ENCODE measurements at regions of chr7 and their contacts with region 1.

Region 1: DNA sequence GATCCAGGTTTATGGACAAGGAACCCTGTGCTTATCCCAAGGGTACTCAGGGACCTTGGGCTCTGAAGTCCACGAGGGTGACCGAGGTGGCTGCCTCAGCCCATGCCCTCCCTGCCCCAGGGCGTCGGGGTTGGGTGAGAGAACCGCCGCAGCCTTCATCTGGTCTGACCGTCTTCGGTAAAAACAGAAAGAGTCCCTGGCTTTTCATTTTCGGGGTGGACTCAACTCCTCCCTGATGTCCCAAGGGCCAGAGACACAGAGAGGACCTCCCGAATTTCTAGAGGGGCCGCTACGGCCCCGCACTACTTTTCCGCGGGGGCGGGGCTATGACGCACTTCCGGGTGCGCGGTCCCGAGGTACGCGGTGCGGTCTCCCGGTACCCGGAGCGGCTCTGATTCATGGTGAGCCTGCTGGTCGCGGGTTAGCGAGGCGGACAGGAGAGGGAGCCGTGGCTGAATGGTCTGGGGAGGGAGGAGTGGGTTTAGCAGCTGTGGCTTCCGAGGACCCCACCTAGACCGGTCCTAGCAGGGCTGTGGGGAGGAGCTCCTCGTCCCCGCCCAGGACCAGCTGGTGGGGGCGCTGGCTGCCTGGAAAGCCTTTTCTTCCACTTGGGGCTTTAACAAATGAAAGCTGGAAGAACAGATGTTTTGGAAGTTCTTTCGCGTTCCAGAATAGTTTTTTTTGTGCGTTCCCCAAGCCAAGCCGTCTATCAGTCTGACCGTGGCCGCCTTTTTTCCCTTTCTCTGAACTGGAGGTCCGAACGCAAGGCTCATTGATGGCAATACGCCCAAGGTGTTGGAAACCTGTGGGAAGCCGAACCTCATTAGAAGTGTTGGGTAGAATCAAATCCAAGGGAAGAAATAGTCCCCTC is at the start of gene ZSCAN21:
- DNase-seq: peak; percentile 81
- H3K4me3 ChIP-seq: peak within 1 kb of the TSS; percentile 75 to 87 (median 86)
- H3K27ac ChIP-seq: peak within 1 kb of the TSS; percentile 70
- H3K4me1 ChIP-seq: peaks cover 3% of the 10 kb centered on the region
- H3K27me3 ChIP-seq: no peaks in the 10 kb centered on the region
- CTCF ChIP-seq: peak in 1 of 2 donors; percentile 9
- POLR2A ChIP-seq: peak; percentile 85
- total RNA-seq, gene ZSCAN21: 7.4 and 7.7 TPM in 2 replicates

Region 2: GRCh38 chr7:99910976-99911375 is 138.7 kb before region 1 on chr7:
- CTCF ChIA-PET with region 1: interaction called, 21 read pairs
- POLR2A ChIA-PET with region 1: no interaction called
- dilution Hi-C with region 1: no loop called
- intact Hi-C with region 1: loop called (anchors 1 kb)
- DNase-seq: no peak
- H3K4me3 ChIP-seq: no peak overlapping the region
- H3K27ac ChIP-seq: no peak overlapping the region
- H3K4me1 ChIP-seq: no peaks in the 10 kb centered on the region
- H3K27me3 ChIP-seq: no peaks in the 10 kb centered on the region
- CTCF ChIP-seq: no peak
- POLR2A ChIP-seq: no peak

Region 3: GRCh38 chr7:99918959-99919813 is 130.5 kb before region 1 on chr7 and contains the start of gene TRIM4:
- CTCF ChIA-PET with region 1: interaction called, 21 read pairs
- POLR2A ChIA-PET with region 1: no interaction called
- dilution Hi-C with region 1: no loop called
- intact Hi-C with region 1: no loop called
- DNase-seq: peak; percentile 90
- H3K4me3 ChIP-seq: peak within 1 kb of the TSS; percentile 51 to 84 (median 58)
- H3K27ac ChIP-seq: peak within 1 kb of the TSS; percentile 63
- H3K4me1 ChIP-seq: peaks cover 17% of the 10 kb centered on the region
- H3K27me3 ChIP-seq: no peaks in the 10 kb centered on the region
- CTCF ChIP-seq: peak; percentile 13 to 42
- POLR2A ChIP-seq: peak; percentile 77
- total RNA-seq, gene TRIM4: 19.1 and 22.1 TPM in 2 replicates

Region 4: GRCh38 chr7:99975782-99976521 is 73.7 kb before region 1 on chr7 and contains the start of gene AZGP1:
- CTCF ChIA-PET with region 1: interaction called, 8 read pairs
- POLR2A ChIA-PET with region 1: no interaction called
- dilution Hi-C with region 1: no loop called
- intact Hi-C with region 1: loop called (anchors 5 kb)
- DNase-seq: no peak
- H3K4me3 ChIP-seq: no peak within 1 kb of the TSS
- H3K27ac ChIP-seq: no peak within 1 kb of the TSS
- H3K4me1 ChIP-seq: no peaks in the 10 kb centered on the region
- H3K27me3 ChIP-seq: peaks cover 0 to 5% of the 10 kb centered on the region in 2 experiments
- CTCF ChIP-seq: no peak
- POLR2A ChIP-seq: no peak
- total RNA-seq, gene AZGP1: not detected in 2 replicates

Region 5: GRCh38 chr7:99997545-99998137 is 52.0 kb before region 1 on chr7:
- CTCF ChIA-PET with region 1: interaction called, 158 read pairs
- POLR2A ChIA-PET with region 1: interaction called, 3 read pairs
- dilution Hi-C with region 1: no loop called
- intact Hi-C with region 1: loop called (anchors 1 kb)
- DNase-seq: peak; percentile 55
- H3K4me3 ChIP-seq: peak overlapping the region; percentile 6 to 53 (median 47)
- H3K27ac ChIP-seq: no peak overlapping the region
- H3K4me1 ChIP-seq: no peaks in the 10 kb centered on the region
- H3K27me3 ChIP-seq: no peaks in the 10 kb centered on the region
- CTCF ChIP-seq: peak in 1 of 2 donors; percentile 32
- POLR2A ChIP-seq: peak; percentile 79

Region 6: DNA sequence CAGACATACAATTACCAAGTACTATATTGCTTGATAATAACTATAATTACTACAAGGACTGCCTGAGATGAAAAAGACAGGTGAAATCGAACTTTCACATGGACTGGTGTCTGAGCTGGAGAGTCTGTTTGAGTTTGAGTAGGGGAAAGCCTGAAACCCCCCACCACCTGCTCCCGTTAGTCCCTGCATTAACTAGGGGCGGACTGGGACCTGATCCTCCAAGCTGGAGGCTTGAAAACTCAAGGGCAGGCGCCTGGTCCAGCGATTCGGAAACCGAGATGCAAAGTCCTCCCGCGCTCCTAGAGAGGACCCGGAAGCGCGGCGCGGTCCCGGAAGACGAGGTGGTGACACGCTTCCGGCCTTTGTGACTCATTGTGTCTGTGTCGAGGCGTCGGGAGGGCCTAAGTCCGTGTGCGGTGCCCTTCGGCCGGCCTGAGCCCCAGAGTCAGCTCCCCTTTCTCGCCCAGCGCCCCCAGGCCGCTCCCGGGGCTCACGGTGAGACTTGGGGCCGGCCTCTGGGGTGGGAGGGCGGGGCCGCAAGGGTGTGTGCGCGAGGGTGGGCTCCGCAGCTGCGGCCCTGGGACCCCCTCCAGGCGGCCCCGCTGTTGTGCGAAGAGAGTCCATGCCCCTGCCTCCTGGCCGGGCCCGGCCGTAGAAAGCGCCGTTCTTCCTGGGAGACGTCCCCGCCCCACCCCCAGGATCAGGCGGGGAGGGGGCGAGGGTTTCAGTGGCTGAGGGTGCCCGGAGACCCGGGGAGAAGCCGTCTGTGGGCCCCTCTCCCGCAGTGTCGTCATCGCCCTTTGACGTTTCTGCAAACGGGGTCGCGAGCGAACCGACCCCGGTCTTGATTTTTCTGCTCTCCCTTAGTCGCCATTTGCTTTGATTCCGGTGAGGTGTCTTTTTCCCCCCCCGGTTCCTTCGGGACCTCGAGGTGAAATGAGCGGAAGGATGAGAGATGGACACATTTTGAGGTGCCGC is 34.2 kb before region 1 on chr7 and contains the start of gene ZKSCAN1:
- CTCF ChIA-PET with region 1: interaction called, 4 read pairs
- POLR2A ChIA-PET with region 1: interaction called, 6 read pairs
- dilution Hi-C with region 1: no loop called
- intact Hi-C with region 1: loop called (anchors 1 kb)
- DNase-seq: peak; percentile 89
- H3K4me3 ChIP-seq: peak within 1 kb of the TSS; percentile 92 to 100 (median 97)
- H3K27ac ChIP-seq: peak within 1 kb of the TSS; percentile 98
- H3K4me1 ChIP-seq: peaks cover 12% of the 10 kb centered on the region
- H3K27me3 ChIP-seq: no peaks in the 10 kb centered on the region
- CTCF ChIP-seq: no peak
- POLR2A ChIP-seq: peak; percentile 89
- total RNA-seq, gene ZKSCAN1: 52.8 and 57.8 TPM in 2 replicates

Region 7: DNA sequence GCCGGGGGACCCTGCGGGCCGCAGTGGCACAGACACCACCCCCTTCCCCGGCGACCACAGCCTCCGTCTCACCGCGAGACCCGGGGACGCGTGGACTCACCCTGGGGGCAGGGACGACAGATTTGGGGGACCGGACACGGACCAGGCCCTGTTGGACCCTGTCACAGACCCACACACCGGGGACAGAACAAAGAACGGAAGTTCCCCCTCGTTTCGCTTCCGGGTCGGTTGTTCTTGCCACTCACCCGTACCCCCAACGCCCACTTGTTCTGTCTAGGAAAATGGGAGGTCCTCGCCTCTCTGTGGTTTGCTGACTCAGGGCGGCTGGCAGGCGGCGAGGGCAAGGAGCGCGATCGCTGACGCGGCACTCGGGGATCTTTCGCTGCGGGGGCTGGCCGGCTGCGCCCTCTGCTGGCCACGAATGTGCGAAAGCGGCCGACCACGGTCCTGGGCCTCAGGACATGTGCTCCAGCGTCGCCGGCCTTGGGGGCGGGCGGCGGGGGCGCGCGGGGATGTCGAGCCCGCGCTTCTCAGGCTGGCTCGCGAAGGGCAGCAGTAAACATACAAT is 31.9 kb after region 1 on chr7 and contains the start of gene ZNF3:
- CTCF ChIA-PET with region 1: no interaction called
- POLR2A ChIA-PET with region 1: no interaction called
- dilution Hi-C with region 1: no loop called
- intact Hi-C with region 1: loop called (anchors 1 kb)
- DNase-seq: peak; percentile 100
- H3K4me3 ChIP-seq: peak within 1 kb of the TSS; percentile 85 to 92 (median 89)
- H3K27ac ChIP-seq: peak within 1 kb of the TSS; percentile 78
- H3K4me1 ChIP-seq: peaks cover 19% of the 10 kb centered on the region
- H3K27me3 ChIP-seq: no peaks in the 10 kb centered on the region
- CTCF ChIP-seq: peak; percentile 96 to 98
- POLR2A ChIP-seq: peak; percentile 86
- total RNA-seq, gene ZNF3: 30.9 and 31.1 TPM in 2 replicates